A673 (cell line): ENCODE measurements at regions of chr1 and their contacts with region 1.

Region 1: GRCh38 chr1:205749234-205750137 is 496 bp downstream of the NUCKS1 start:
- DNase-seq: peak; percentile 98
- H3K4me3 ChIP-seq: peak overlapping the region; percentile 78
- H3K27ac ChIP-seq: peak overlapping the region; percentile 96
- H3K4me1 ChIP-seq: peaks cover 26% of the 10 kb centered on the region
- H3K27me3 ChIP-seq: no peaks in the 10 kb centered on the region
- CTCF ChIP-seq: 0 out of 2 replicates have a peak, but pooled peaks have one; percentile 8

Region 2: DNA sequence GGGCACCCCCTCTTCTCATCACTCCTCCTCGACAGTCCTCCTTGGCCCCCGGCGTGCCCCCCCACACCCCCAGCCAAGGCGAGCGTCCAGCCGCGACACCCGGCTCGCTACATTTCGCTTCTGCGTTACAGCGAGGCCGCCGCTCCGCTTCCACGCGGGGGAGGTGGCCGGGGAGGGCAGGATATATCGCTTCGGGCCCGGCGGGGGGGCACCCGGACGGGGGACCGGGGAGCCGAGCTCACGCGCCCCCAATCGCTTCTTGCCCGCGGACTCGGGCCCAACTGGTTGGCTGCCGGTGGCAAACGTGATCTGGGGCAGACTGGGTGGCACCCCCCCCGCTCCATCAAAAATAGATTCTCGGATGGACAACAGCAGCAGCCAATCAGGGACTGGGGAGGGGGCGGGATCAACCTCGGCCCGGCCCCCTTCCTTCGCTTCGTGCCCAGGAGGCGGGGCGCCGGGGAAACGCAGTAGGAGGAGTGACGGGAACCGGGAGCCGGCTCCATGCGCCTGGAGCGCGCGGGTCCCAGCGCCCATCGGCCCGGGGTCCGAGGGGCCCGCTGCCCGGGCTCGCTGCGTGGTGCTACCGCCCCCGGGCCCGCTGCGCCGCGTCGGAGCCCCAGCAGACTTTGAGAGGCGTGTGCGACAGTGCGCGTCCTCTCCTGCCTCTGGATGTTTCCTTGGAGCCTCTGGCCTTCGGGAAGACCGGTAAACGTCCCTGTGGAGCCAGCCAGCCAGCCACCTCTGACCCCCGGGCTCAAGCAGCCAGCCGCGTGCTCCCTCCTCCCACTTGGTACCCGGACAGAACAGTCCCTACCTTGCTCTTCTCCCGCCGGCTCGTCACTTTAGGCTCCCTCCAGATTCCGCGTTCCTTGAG is 63.6 kb after region 1 on chr1 and contains the start of gene SLC41A1:
- CTCF ChIA-PET with region 1: no interaction called
- POLR2A ChIA-PET with region 1: no interaction called
- intact Hi-C with region 1: loop called (anchors 2 kb)
- DNase-seq: peak; percentile 94
- H3K4me3 ChIP-seq: peak within 1 kb of the TSS; percentile 84
- H3K27ac ChIP-seq: peak within 1 kb of the TSS; percentile 74
- H3K4me1 ChIP-seq: peaks cover 20% of the 10 kb centered on the region
- H3K27me3 ChIP-seq: peaks cover 8% of the 10 kb centered on the region
- CTCF ChIP-seq: no peak
- total RNA-seq, gene SLC41A1: 16.1 and 19.5 TPM in 2 replicates